Activated CD4-positive, alpha-beta T cell treated with anti-CD3 and anti-CD28 coated beads for 36 hours (primary cell): ENCODE measurements at regions of chr20 and their contacts with region 1.

Region 1: DNA sequence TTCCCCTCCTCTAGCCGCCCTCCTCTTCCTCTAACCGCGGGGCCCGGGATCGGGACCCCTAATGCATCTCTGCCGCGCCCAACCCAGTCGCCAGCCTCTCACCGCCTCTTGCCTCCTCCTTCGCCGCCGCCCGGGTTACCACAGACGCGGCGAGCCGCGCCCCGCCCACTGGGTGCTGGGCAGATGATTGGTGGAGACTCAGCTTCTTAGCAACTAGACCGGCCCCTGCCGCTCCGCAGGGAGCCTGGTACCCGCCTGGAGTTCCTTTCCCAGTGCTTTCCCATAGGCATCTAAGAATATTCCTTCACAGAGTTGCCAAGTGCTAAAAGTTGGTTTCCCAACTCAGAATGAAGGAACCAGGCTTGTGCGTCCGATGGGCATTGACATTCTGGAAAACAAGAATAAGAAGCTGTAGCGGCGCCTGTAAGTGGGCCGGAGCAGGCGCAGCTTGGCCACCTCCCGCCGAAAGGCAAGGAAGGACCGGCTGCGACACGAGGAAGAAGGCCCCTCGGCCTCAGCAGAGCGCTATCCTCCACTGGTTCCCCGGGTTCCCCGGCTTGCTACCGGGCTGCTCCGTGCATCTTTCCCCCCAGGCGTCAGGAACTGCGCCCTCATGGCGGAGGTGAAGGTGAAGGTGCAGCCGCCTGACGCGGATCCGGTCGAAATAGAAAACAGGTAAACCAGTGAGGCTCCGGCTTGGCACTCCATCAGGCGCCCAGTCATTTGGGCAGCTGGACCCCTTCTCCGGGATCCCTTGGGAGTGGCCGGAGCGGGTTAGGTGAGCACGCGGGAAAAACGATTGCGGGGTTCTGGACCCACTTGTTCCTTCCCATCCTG is at the starts of genes DZANK1 and POLR3F:
- DNase-seq: peak; percentile 96
- ATAC-seq: peak; percentile 99
- H3K4me3 Mint-ChIP-seq: peak within 1 kb of the TSS; percentile 91
- H3K27ac Mint-ChIP-seq: peak within 1 kb of the TSS; percentile 89
- H3K4me1 Mint-ChIP-seq: peaks cover 21% of the 10 kb centered on the region
- H3K27me3 Mint-ChIP-seq: no peaks in the 10 kb centered on the region
- total RNA-seq, gene DZANK1: 1.4 to 2.0 TPM
- total RNA-seq, gene POLR3F: 9.8 to 11.8 TPM

Region 2: DNA sequence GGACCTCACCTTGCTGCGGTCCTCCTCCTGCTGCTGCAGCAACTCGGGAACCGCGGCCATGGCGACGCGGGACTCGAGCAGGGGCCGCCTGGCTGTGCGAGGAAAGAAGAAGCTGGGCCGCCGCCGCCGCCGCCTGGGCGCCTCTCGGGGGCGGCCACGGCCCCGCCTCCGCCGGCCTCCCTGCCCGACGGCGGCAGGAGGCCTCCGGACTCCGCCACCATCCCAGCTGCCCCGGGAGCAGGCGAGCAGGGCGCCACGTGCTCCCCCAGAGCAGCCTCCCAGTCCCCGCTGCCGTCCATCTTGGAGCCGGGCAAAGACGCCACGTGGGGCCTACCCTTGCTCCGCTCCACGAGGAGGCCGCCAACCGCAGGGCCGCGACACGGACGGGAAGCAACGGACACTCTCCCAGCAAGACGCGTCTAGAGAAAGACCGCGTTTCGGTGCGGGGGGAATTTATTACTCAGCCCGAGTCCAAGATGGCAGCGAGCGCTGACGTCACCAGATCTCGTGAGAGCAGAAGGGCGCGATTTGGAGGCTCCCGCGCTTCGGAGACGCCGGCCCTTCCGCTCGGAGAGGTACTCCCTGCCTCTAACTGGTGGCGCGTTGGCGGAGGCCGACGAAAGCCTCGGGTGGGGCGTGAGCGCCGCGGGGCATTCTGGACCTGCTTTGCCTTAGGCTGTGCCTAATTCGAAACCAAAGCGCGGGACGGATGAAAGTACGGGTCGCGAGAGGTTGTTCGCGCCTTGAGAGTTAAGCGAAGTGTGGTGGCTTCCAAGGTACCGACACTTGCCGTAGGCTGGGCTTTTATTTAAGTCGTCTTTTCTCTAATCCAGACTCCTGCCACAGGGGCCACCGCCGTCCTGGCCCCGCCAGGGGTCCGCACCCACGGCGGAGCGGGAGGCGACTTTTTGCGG is 498.5 kb before region 1 on chr20 and contains the starts of genes MGME1 and SNX5:
- CTCF ChIA-PET with region 1: no interaction called
- POLR2A ChIA-PET with region 1: no interaction called
- intact Hi-C with region 1: loop called in 1 of 2 experiments (anchors 1 kb)
- DNase-seq: peak; percentile 100
- ATAC-seq: peak; percentile 91
- H3K4me3 Mint-ChIP-seq: peak within 1 kb of the TSS; percentile 87
- H3K27ac Mint-ChIP-seq: peak within 1 kb of the TSS; percentile 99
- H3K4me1 Mint-ChIP-seq: peaks cover 49% of the 10 kb centered on the region
- H3K27me3 Mint-ChIP-seq: no peaks in the 10 kb centered on the region
- total RNA-seq, gene MGME1: 24.1 to 29.7 TPM
- total RNA-seq, gene SNX5: 204 to 227 TPM

Region 3: GRCh38 chr20:18304585-18304984 is 162.5 kb before region 1 on chr20:
- CTCF ChIA-PET with region 1: no interaction called
- POLR2A ChIA-PET with region 1: no interaction called
- intact Hi-C with region 1: no loop called
- DNase-seq: no peak
- ATAC-seq: no peak
- H3K4me3 Mint-ChIP-seq: no peak overlapping the region
- H3K27ac Mint-ChIP-seq: no peak overlapping the region
- H3K4me1 Mint-ChIP-seq: no peaks in the 10 kb centered on the region
- H3K27me3 Mint-ChIP-seq: no peaks in the 10 kb centered on the region

Region 4: GRCh38 chr20:18456600-18456999 is 10.5 kb before region 1 on chr20:
- CTCF ChIA-PET with region 1: interaction called, 11 read pairs
- POLR2A ChIA-PET with region 1: interaction called, 3 read pairs
- intact Hi-C with region 1: no loop called
- DNase-seq: no peak
- ATAC-seq: no peak
- H3K4me3 Mint-ChIP-seq: no peak overlapping the region
- H3K27ac Mint-ChIP-seq: no peak overlapping the region
- H3K4me1 Mint-ChIP-seq: no peaks in the 10 kb centered on the region
- H3K27me3 Mint-ChIP-seq: no peaks in the 10 kb centered on the region

Region 5: DNA sequence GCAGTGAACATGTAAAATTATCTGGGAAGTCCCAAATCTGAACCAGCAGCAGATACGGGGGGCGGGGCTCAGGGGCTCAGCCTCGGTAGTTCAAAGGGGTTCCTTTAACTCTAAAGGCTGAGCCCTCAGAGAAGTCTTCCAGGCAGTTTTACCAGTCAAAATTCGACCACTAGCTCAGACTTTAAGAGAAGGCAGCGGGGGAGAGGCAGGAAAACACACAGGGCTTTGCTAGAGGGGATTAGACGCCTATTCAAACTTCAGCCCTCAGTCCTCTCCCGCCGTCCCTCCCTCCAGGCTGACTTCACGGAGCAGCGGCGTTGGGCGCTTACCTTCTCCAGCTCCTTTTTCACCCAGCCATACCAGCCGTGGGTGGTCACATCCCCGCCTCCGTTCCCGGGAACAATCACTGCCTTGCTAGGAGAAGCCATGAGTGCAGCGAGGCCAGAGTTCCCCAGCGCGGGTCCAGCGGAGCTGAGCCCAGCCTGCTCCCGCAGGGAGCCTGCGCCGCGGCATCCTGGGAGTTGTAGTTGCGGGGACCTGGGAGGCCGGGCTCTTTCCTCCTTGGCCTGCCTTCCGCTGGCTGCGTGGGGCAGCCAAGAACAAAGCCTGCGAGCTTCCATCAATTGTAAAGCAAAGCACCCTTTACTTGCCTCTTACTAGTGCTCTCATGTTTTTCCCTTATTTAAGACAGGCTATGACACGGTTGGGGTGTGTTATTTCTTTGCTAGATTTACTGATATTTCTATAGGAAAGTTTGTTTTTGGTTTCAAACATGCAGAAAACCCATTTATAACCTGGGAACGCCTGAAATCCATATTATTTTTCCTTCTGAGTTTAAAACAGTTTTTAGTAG is 29.9 kb after region 1 on chr20 and contains the start of gene RBBP9:
- CTCF ChIA-PET with region 1: interaction called, 3 read pairs
- POLR2A ChIA-PET with region 1: interaction called, 12 read pairs
- intact Hi-C with region 1: loop called (anchors 1 kb)
- DNase-seq: peak; percentile 88
- ATAC-seq: peak; percentile 99
- H3K4me3 Mint-ChIP-seq: peak within 1 kb of the TSS; percentile 97
- H3K27ac Mint-ChIP-seq: peak within 1 kb of the TSS; percentile 83
- H3K4me1 Mint-ChIP-seq: peaks cover 12% of the 10 kb centered on the region
- H3K27me3 Mint-ChIP-seq: no peaks in the 10 kb centered on the region
- total RNA-seq, gene RBBP9: 19.9 to 20.6 TPM

Region 6: DNA sequence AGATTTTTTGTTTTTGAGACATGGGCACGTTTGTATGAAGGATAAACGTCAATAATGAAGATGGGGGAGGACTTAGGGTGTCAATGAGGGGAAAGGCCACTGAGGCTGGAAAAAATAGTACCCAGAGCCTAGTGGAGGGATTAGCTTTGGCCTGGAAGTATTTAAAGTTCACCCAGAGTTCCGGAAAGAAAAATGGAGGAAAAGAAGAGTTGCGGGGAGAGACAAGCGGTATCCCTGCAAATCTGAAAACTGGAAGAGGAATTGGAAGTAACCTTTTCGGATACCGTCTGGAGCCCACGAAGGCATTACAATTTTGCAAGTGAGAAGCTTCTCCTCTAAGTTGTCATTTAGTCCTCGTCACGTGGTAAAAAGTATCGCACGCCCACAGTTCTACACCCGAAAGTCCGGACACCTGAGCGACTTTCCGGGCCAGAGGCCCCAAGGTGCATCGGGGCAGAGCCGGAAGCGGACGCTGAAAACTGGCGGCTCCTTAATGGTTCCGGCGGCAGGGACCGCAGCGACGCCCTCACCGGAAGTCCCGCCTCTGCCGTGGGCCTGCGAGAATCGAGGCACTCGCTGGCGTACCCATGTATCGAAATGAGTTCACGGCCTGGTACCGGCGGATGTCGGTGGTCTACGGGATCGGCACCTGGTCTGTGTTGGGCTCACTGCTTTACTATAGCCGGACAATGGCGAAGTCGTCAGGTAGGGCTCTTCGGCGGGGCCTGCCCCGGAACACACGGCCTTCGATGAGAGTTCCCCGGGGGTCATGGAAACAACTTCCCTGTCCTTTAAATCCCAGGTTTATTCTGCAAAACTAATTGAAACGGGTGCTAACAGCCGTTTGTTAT is 100.0 kb after region 1 on chr20 and contains the start of gene SMIM26:
- CTCF ChIA-PET with region 1: no interaction called
- POLR2A ChIA-PET with region 1: interaction called, 4 read pairs
- intact Hi-C with region 1: loop called (anchors 1 kb)
- DNase-seq: peak; percentile 97
- ATAC-seq: peak; percentile 100
- H3K4me3 Mint-ChIP-seq: peak within 1 kb of the TSS; percentile 98
- H3K27ac Mint-ChIP-seq: peak within 1 kb of the TSS; percentile 92
- H3K4me1 Mint-ChIP-seq: peaks cover 13% of the 10 kb centered on the region
- H3K27me3 Mint-ChIP-seq: no peaks in the 10 kb centered on the region
- total RNA-seq, gene SMIM26: 64.4 to 66.2 TPM

Region 7: DNA sequence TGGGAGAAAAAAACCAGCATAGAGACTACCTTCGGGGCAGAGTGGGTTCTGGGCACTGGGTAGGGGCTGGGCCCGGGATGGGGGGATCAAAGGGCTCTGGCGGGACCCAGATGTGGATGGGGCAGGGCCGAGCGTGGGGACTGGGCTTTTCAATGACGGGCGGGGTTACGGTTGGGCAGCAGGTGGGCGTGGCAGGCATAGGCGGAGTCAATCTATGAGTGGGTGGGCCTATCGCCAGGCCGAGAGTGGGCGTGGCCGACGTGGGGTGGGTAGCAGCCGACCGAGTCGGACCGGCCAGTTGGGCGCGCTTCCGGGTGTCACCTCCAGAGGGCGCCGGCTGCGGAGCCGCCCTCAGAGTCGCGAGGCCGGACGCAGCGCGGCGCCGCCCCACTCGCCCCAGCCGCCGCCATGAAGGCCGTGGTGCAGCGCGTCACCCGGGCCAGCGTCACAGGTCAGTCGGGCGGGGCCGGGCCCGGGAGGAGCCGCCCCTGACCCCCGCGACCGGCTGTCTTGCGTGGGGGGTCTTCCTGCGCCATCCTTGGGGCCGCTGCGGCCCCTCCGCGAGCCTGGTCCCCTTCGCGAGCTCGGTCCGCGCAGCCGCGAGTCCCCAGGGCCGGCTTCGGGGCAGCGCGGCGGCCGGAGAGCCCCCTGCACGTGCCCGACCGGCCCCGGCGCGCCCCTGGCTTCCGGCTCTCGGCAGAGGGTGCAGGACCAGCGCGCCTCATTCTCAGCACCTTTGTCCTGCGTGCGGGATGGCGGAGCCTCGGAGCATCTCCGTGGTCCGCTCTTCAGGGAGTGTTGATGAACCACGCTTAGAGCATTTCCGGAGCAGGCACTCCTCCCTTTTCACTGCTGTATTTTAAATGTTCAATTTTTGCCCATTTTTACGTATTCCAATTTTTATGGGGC is 120.8 kb after region 1 on chr20 and contains the start of gene DTD1:
- CTCF ChIA-PET with region 1: interaction called, 3 read pairs
- POLR2A ChIA-PET with region 1: interaction called, 3 read pairs
- intact Hi-C with region 1: loop called (anchors 1 kb)
- DNase-seq: peak; percentile 96
- ATAC-seq: peak; percentile 92
- H3K4me3 Mint-ChIP-seq: peak within 1 kb of the TSS; percentile 89
- H3K27ac Mint-ChIP-seq: peak within 1 kb of the TSS; percentile 82
- H3K4me1 Mint-ChIP-seq: peaks cover 25% of the 10 kb centered on the region
- H3K27me3 Mint-ChIP-seq: peaks cover 6% of the 10 kb centered on the region
- total RNA-seq, gene DTD1: 40.7 to 54.6 TPM

Region 8: GRCh38 chr20:18793625-18794427 is 326.7 kb after region 1 on chr20:
- CTCF ChIA-PET with region 1: no interaction called
- POLR2A ChIA-PET with region 1: no interaction called
- intact Hi-C with region 1: loop called in 1 of 2 experiments (anchors 1 kb)
- DNase-seq: peak; percentile 92
- ATAC-seq: peak; percentile 98
- H3K4me3 Mint-ChIP-seq: peak overlapping the region; percentile 87
- H3K27ac Mint-ChIP-seq: peak overlapping the region; percentile 96
- H3K4me1 Mint-ChIP-seq: peaks cover 17% of the 10 kb centered on the region
- H3K27me3 Mint-ChIP-seq: peaks cover 7% of the 10 kb centered on the region